ENCODE measurements at regions of chr3 and their contacts with region 1.

Region 1: DNA sequence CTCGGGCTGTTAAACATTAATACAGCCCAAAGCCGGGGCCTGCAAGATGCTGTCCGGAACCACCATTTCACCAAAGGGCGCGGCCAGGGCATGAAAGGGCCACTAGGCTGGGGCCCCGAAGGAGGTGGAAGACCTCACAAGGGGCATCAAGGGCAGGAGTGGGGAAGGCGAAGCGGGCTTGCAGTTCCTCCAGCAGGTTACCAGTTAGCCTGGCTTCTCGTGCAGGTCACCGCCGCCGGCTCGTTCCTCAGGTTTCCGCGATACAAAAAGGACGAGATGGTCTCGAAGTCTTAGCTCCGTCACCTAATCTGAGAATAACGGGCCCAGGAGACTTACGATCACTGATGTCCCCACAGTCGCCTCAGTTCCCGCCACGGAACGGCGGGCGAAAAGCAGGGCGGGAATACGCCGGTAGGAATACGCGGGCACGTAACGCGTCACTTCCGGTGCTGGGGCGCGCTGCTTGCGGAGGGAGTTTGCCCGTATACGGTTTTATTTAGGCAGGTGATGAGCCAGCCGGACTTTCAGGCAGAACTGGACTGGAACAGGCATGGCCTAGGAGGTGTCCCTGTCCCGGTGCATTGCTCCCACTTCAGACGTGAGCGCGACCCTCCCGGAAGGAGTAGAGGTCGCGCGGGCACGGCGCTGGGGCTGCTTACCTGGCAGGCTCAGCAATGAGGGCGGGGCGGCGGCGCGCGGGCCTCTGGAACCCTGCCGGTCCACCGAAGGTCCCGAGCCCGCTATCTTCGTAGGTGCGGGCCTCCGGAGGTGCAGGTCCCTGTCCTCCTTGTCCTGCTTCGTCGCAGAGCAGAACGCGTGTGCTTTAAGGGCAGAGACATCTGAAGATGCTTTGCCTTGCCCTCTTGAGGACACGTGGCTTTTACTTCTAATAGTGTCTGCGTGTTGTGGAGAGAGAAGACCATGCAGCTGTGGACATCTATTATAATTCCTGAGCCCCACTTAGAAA is at the start of gene RFC4:
- DNase-seq: peak; percentile 88
- ATAC-seq: peak; percentile 82
- H3K4me3 Mint-ChIP-seq: peak within 1 kb of the TSS; percentile 95
- H3K27ac Mint-ChIP-seq: peak within 1 kb of the TSS; percentile 96
- H3K4me1 Mint-ChIP-seq: peaks cover 25% of the 10 kb centered on the region
- H3K27me3 Mint-ChIP-seq: no peaks in the 10 kb centered on the region
- CTCF ChIP-seq: no peak
- total RNA-seq, gene RFC4: 110 to 125 TPM

Region 2: DNA sequence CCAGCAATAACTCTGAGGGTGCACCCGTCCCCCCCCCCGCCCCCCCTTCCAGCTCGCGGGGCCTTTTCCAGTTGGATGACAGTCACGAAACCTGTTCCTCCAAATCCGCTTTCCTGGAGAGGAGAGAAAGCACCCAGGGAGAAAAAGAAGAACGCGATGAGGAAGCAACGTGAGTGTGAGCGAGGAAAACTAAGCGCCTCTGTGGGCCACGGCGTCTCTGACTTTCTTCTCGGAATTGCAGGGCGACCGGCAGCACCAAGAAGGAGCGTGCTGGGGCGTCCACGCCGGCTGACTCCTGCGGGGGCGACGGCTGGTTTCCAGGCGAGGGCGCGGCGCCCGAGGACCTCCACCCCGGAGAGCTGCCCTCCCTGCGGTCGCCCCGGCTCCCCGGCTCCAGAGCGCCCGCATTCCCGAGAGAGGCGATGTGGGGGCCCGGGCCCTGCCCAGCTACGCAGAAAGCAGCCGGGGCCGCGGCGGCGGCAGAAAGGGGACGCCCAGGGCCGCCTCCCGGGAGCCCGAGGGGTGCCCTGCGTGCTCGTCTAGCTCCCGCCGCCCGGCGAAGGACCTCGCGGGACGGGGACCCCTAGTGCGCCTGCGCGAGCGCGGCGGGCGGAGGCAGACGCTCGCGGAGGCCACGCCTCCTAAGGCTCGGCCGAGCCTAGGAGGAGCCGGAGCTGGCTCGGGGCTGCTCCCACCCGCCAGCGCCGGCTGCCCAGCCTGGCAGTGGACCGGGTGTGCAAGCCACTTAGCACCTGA is 20.8 kb after region 1 on chr3:
- CTCF ChIA-PET with region 1: interaction called, 61 read pairs
- POLR2A ChIA-PET with region 1: interaction called, 10 read pairs
- intact Hi-C with region 1: no loop called
- DNase-seq: peak; percentile 83
- ATAC-seq: peak; percentile 86
- H3K4me3 Mint-ChIP-seq: peak overlapping the region; percentile 81
- H3K27ac Mint-ChIP-seq: peak overlapping the region; percentile 71
- H3K4me1 Mint-ChIP-seq: peaks cover 28% of the 10 kb centered on the region
- H3K27me3 Mint-ChIP-seq: peaks cover 36% of the 10 kb centered on the region
- CTCF ChIP-seq: no peak

Region 3: DNA sequence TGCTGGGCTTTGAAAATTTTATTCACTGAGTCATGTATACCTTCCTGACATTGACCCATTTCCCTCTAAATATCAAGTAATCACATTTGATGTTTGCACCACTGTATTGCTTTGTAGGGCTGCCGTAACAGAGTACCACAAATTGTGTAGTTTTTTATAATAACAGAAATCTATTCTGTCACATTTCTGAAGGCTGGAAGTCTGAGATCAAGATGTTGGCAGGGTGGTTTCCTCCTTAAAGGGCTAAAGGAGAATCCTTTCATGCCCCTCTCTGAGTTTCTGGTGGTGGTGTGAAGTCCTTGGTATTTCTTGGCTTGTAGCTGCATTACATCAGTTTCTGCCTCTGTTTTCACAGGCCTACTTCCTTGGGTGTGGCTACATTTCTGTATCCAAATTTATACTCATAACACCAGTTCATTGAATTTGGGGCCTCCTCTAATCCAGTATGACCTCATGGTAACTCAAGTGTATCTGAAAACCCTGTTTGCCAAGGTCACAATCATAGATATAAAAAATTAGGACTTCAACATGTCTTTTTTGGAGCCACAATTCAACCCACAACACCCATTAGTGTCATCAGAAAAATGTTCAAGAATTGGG is 94.9 kb after region 1 on chr3:
- CTCF ChIA-PET with region 1: no interaction called
- POLR2A ChIA-PET with region 1: no interaction called
- intact Hi-C with region 1: no loop called
- DNase-seq: no peak
- ATAC-seq: peak; percentile 79
- H3K4me3 Mint-ChIP-seq: no peak overlapping the region
- H3K27ac Mint-ChIP-seq: peak overlapping the region; percentile 63
- H3K4me1 Mint-ChIP-seq: peaks cover 18% of the 10 kb centered on the region
- H3K27me3 Mint-ChIP-seq: no peaks in the 10 kb centered on the region
- CTCF ChIP-seq: no peak